CD4-positive, alpha-beta T cell (primary cell): ENCODE measurements at regions of chr2 and their contacts with region 1.

Region 1: DNA sequence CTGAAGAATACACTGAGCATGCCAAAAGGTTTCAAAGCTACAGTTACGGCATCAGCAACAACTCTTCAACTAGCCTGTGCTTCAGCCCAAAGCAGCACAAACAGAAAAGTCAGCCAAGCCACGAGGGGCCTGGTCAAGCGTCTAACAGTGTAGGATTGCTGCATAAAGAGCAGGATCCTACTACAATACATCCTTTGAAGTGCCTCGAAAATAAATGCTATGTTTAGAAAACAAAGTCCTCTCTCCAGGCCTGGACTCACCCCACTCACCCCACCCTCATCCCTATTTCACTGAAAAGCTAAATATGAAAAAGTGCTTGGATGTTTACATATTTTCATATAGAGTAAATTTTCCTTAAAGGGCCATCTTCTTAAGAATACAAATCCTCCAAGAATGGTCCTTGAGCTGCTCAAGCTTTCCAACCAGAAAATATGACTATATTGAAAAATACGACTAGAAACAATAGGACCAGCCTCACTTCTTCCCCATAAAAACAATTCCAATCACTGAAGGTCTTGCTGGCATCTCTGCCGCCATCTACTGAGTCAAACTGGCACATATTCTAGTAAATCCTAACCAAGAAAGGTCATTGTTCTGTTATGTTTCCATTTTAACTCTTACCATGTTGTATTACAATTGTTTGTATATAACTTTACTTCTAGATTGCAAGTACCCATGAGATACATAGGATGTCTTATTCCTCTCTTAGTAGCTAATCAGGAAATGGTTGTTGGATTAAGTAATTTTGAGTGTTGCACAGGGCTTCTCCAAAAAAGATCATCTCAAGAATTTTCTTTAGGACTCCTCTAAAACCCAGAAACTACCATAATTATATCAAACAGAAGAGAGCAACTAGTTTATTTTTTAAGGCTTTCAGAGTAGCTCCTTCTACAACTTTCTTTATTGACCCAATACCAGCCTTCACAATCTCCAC is 63.6 kb downstream of the CLHC1 start:
- DNase-seq: peak in 10 of 14 experiments; percentile 10 to 73 (median 30)
- ATAC-seq: peak; percentile 72
- H3K4me3 ChIP-seq: no peak overlapping the region
- H3K4me3 Mint-ChIP-seq: no peak overlapping the region
- H3K27ac ChIP-seq: no peak overlapping the region
- H3K27ac Mint-ChIP-seq: no peak overlapping the region
- H3K4me1 ChIP-seq: no peaks in the 10 kb centered on the region
- H3K4me1 Mint-ChIP-seq: no peaks in the 10 kb centered on the region
- H3K27me3 ChIP-seq: no peaks in the 10 kb centered on the region
- H3K27me3 Mint-ChIP-seq: no peaks in the 10 kb centered on the region
- CTCF ChIP-seq: peak; percentile 84

Region 2: GRCh38 chr2:54899576-54900200 is 268.8 kb before region 1 on chr2:
- CTCF ChIA-PET with region 1: interaction called, 3 read pairs
- POLR2A ChIA-PET with region 1: no interaction called
- intact Hi-C with region 1: loop called (anchors 1 to 2 kb)
- DNase-seq: peak in 3 of 14 experiments; percentile 41 to 47 (median 45)
- ATAC-seq: no peak
- H3K4me3 ChIP-seq: no peak overlapping the region
- H3K4me3 Mint-ChIP-seq: no peak overlapping the region
- H3K27ac ChIP-seq: no peak overlapping the region
- H3K27ac Mint-ChIP-seq: no peak overlapping the region
- H3K4me1 ChIP-seq: peaks cover 21% of the 10 kb centered on the region
- H3K4me1 Mint-ChIP-seq: peaks cover 27% of the 10 kb centered on the region
- H3K27me3 ChIP-seq: no peaks in the 10 kb centered on the region
- H3K27me3 Mint-ChIP-seq: no peaks in the 10 kb centered on the region
- CTCF ChIP-seq: peak; percentile 41

Region 3: DNA sequence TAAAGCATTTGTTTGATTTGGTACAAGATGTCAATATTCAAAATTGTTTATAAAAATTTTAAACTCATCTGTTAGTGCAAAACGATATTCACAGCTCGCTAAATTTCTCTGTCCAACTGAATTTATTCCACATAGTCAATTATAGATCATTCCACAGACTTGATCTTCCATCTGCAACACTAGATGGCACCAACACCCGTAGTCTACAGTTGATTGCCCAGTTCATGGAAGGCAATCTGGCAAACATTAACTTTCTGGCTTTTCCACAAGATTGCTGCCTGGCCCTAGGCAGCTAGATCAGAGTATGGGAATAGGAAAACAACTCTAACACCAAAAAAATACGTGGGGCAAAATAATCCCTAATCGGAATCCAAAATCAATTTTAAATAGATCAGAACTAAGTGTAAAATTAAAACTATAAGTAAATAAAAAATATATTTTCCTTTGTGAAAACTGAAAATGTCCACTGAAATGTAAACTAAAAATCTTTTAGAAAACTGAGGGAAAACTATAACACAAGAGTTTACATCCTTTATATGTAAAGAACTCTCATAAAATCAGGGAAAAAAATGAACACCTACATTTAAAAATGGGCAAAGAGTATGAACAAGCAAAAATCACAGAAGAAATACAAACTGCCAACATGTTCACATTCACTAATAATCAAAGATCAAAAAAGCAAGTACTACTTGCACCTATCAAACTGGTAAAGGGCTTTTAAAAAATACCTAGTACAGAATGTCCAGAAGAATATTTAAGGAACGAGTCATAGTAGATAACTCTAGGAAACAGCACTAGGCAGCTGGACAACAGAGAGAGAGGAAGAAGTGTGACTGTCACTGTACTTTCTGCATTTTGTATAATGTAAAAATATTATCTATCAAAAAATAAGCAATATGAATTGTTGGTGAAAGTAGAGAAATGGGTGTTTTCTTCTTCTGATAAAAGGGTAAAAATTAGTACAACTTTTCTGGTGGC is 153.2 kb before region 1 on chr2:
- CTCF ChIA-PET with region 1: interaction called, 7 read pairs
- POLR2A ChIA-PET with region 1: interaction called, 3 read pairs
- intact Hi-C with region 1: loop called (anchors 1 kb)
- DNase-seq: peak in 13 of 14 experiments; percentile 4 to 74 (median 26)
- ATAC-seq: peak; percentile 23
- H3K4me3 ChIP-seq: no peak overlapping the region
- H3K4me3 Mint-ChIP-seq: no peak overlapping the region
- H3K27ac ChIP-seq: no peak overlapping the region
- H3K27ac Mint-ChIP-seq: no peak overlapping the region
- H3K4me1 ChIP-seq: peaks cover 4% of the 10 kb centered on the region
- H3K4me1 Mint-ChIP-seq: peaks cover 59% of the 10 kb centered on the region
- H3K27me3 ChIP-seq: no peaks in the 10 kb centered on the region
- H3K27me3 Mint-ChIP-seq: no peaks in the 10 kb centered on the region
- CTCF ChIP-seq: peak; percentile 82